ENCODE measurements at regions of chr17 and their contacts with region 1.

Region 1: GRCh38 chr17:76492989-76493501 is 8.2 kb downstream of the RHBDF2 start:
- DNase-seq: peak; percentile 59
- H3K4me3 ChIP-seq: no peak overlapping the region
- H3K27ac ChIP-seq: peak overlapping the region; percentile 42
- H3K4me1 ChIP-seq: peaks cover 27% of the 10 kb centered on the region
- H3K27me3 ChIP-seq: no peaks in the 10 kb centered on the region
- CTCF ChIP-seq: no peak
- POLR2A ChIP-seq: no peak

Region 2: DNA sequence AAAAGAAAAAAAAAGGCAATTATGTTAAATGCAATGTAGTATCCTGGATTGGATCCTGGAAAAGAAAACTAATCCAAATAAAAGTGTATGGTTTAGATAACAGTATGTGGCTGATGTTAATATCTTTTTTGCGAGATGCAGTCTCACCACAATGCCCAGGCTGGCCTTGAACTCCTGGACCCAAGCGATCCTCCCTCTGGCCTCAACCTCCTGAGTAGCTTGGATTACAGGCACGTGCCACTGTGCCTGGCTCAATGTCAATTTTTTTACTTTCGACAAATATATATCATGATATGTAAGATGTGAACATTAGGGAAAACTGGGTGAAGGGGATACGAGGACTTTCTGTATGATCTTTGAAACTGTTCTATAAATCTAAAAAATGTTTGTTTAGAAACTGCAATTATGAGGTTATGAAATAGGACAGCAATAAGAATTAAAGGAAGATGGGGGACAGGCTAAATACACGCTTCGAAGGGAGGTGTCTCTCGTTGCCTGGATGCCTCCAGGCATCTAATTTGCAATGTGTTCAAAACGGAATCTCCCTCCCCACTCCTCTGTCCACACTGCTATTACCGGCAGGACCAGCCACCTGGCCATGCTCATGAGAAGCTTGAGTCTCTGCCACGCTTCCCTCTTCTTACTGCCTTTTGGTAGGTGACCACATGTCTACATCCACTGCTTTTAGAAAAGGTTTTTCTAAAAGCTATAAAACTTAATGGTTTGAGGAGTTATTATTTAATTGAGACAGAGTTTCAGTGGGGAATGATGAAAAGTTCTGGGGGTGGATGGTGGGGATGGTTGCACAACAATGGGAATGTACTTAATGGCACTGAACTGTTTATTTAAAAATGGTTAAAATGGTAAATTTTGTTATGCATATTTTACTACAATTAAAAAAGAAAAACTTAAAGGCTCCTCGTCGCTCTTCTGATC is 55.3 kb before region 1 on chr17:
- CTCF ChIA-PET with region 1: no interaction called
- POLR2A ChIA-PET with region 1: no interaction called
- dilution Hi-C with region 1: no loop called
- intact Hi-C with region 1: no loop called
- DNase-seq: no peak
- H3K4me3 ChIP-seq: no peak overlapping the region
- H3K27ac ChIP-seq: no peak overlapping the region
- H3K4me1 ChIP-seq: peaks cover 6% of the 10 kb centered on the region
- H3K27me3 ChIP-seq: no peaks in the 10 kb centered on the region
- CTCF ChIP-seq: no peak
- POLR2A ChIP-seq: no peak

Region 3: GRCh38 chr17:76467366-76467765 is 25.7 kb before region 1 on chr17 and contains the start of gene AANAT:
- CTCF ChIA-PET with region 1: interaction called, 12 read pairs
- POLR2A ChIA-PET with region 1: interaction called, 5 read pairs
- dilution Hi-C with region 1: no loop called
- intact Hi-C with region 1: no loop called
- DNase-seq: no peak
- H3K4me3 ChIP-seq: no peak within 1 kb of the TSS
- H3K27ac ChIP-seq: no peak within 1 kb of the TSS
- H3K4me1 ChIP-seq: no peaks in the 10 kb centered on the region
- H3K27me3 ChIP-seq: no peaks in the 10 kb centered on the region
- CTCF ChIP-seq: no peak
- POLR2A ChIP-seq: no peak
- total RNA-seq, gene AANAT: not detected in 2 replicates

Region 4: DNA sequence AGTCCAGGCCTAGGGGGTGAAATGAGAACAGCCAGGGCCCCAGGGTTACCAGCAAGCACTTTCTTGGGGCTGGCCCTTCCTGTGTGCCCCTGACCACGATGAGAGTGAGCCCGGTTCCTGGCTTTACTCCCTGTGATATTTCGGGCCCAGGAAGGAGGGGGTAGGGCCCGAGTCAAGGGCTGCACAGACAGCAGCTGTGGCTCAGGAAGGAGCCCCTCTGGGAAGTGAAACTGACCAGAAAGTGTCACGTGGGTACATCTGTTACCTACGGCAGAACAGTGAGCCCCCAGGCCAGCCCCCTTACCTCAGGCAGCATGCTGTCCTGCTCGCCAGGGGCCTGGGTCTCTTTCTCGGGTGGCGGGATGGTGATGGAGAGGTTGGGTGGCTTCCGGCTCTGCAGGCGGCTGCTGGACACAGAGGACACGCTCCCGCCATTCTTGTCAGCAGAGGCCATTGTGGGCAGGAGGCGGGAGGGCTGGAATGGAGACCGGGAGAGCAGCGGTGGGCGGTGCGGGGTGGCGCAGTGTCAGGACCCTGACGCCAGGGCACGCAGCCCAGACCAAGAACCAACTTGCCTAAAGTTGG is 11.9 kb before region 1 on chr17:
- CTCF ChIA-PET with region 1: interaction called, 4 read pairs
- POLR2A ChIA-PET with region 1: no interaction called
- dilution Hi-C with region 1: no loop called
- intact Hi-C with region 1: loop called (anchors 1 kb)
- DNase-seq: no peak
- H3K4me3 ChIP-seq: no peak overlapping the region
- H3K27ac ChIP-seq: no peak overlapping the region
- H3K4me1 ChIP-seq: peaks cover 15% of the 10 kb centered on the region
- H3K27me3 ChIP-seq: no peaks in the 10 kb centered on the region
- CTCF ChIP-seq: no peak
- POLR2A ChIP-seq: no peak